GM12878 (cell line): ENCODE measurements at regions of chr2 and their contacts with region 1.

Region 1: DNA sequence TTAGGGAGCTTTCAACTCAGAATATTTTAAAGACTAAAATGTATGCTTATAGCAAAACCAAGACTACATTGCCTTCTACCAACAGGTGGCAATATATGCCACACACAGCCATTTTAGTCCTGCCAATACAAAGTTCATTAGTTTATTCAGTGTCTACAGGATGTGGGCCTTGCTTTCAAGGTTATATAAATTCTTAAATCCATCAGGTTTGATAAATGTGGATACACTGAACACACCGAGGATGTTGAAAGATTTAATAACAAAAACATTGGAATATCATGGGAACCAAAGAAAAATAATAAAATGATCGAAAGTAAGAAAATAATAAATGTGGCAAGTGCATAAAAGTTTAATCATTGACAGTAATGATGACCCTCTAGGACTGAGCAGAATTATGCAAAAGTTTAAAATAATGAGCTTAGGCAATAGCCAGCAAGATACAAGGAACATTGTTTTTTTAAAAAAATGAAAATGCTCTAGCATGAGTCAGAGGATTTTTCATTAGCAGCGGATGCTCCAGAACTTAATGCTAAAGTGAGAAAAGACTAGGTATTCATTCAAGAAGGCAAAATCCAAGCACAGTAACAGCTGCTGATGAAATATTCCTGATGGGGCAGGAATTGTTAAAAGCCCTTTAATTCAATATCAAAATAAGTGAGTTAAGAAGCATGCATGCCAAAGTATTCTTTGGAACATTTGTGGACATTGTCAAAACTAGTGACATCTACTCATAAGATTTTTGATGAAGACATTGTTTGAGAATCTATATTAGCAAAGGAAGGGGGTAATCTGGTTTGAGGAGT is 14.2 kb downstream of the SCN9A start:
- DNase-seq: no peak
- ATAC-seq: peak; percentile 82
- H3K4me3 ChIP-seq: no peak overlapping the region
- H3K27ac ChIP-seq: no peak overlapping the region
- H3K4me1 ChIP-seq: no peaks in the 10 kb centered on the region
- H3K27me3 ChIP-seq: no peaks in the 10 kb centered on the region
- CTCF ChIP-seq: peak in 2 of 3 experiments; percentile 28 to 29; a peak in 4 of 6 replicates
- EP300 ChIP-seq: no peak
- POLR2A ChIP-seq: no peak
- RAD21 ChIP-seq: peak; percentile 41

Region 2: GRCh38 chr2:165857876-165858275 is 503.7 kb before region 1 on chr2:
- CTCF ChIA-PET with region 1: no interaction called
- POLR2A ChIA-PET with region 1: no interaction called
- RAD21 ChIA-PET with region 1: no interaction called
- SMC1A ChIA-PET with region 1: no interaction called
- in situ Hi-C with region 1: no loop called
- intact Hi-C with region 1: no loop called
- DNase-seq: no peak
- ATAC-seq: no peak
- H3K4me3 ChIP-seq: no peak overlapping the region
- H3K27ac ChIP-seq: no peak overlapping the region
- H3K4me1 ChIP-seq: no peaks in the 10 kb centered on the region
- H3K27me3 ChIP-seq: no peaks in the 10 kb centered on the region
- CTCF ChIP-seq: no peak
- EP300 ChIP-seq: no peak
- POLR2A ChIP-seq: no peak
- RAD21 ChIP-seq: no peak

Region 3: GRCh38 chr2:166516712-166517303 is 155.3 kb after region 1 on chr2:
- CTCF ChIA-PET with region 1: no interaction called
- POLR2A ChIA-PET with region 1: no interaction called
- RAD21 ChIA-PET with region 1: interaction called, 3 read pairs
- SMC1A ChIA-PET with region 1: no interaction called
- in situ Hi-C with region 1: no loop called
- intact Hi-C with region 1: loop called (anchors 5 kb)
- DNase-seq: no peak
- ATAC-seq: 0 out of 3 replicates have a peak, but pooled peaks have one; percentile 37
- H3K4me3 ChIP-seq: no peak overlapping the region
- H3K27ac ChIP-seq: no peak overlapping the region
- H3K4me1 ChIP-seq: no peaks in the 10 kb centered on the region
- H3K27me3 ChIP-seq: no peaks in the 10 kb centered on the region
- CTCF ChIP-seq: peak in 2 of 3 experiments; percentile 30 to 31; a peak in 3 of 6 replicates
- EP300 ChIP-seq: no peak
- POLR2A ChIP-seq: no peak
- RAD21 ChIP-seq: no peak

Region 4: GRCh38 chr2:166593403-166593802 is 231.9 kb after region 1 on chr2:
- CTCF ChIA-PET with region 1: no interaction called
- POLR2A ChIA-PET with region 1: no interaction called
- RAD21 ChIA-PET with region 1: no interaction called
- SMC1A ChIA-PET with region 1: no interaction called
- in situ Hi-C with region 1: no loop called
- intact Hi-C with region 1: no loop called
- DNase-seq: no peak
- ATAC-seq: no peak
- H3K4me3 ChIP-seq: no peak overlapping the region
- H3K27ac ChIP-seq: no peak overlapping the region
- H3K4me1 ChIP-seq: no peaks in the 10 kb centered on the region
- H3K27me3 ChIP-seq: no peaks in the 10 kb centered on the region
- CTCF ChIP-seq: no peak
- EP300 ChIP-seq: no peak
- POLR2A ChIP-seq: no peak
- RAD21 ChIP-seq: no peak